Heart left ventricle (tissue), 16 donors: ENCODE measurements at regions of chr7 and their contacts with region 1.

Region 1: GRCh38 chr7:85287106-85287825 is 100.4 kb upstream of the SEMA3D start:
- DNase-seq: no peak
- ATAC-seq: no peak
- H3K4me3 ChIP-seq: no peak overlapping the region
- H3K27ac ChIP-seq: no peak overlapping the region
- H3K4me1 ChIP-seq: no peaks in the 10 kb centered on the region
- H3K27me3 ChIP-seq: no peaks in the 10 kb centered on the region
- CTCF ChIP-seq: no peak
- POLR2A ChIP-seq: no peak

Region 2: GRCh38 chr7:85074016-85074415 is 213.2 kb before region 1 on chr7:
- intact Hi-C with region 1: no loop called
- DNase-seq: no peak
- ATAC-seq: no peak
- H3K4me3 ChIP-seq: no peak overlapping the region
- H3K27ac ChIP-seq: no peak overlapping the region
- H3K4me1 ChIP-seq: peaks cover 0 to 4% (median 0%) of the 10 kb centered on the region in 12 donors
- H3K27me3 ChIP-seq: no peaks in the 10 kb centered on the region
- CTCF ChIP-seq: no peak
- POLR2A ChIP-seq: no peak

Region 3: DNA sequence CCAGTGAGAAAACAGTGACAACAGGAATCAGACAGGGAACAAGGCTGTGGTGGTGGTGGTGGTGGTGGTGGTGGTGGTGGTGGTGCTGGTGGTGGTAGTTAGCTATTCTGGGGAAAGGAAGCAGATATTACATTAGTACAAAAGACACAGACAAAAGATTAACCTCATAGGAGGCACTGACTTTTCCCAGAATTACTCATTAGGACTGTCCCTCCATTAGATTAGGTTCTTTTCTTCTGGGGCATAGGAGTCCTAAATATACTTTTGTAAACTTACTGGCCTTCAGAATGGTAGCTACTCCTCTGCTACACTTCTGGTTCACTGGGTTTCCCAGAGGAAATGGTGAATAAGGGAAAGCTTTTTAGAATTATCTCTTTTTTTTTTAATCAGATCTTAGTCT is 56.2 kb after region 1 on chr7:
- intact Hi-C with region 1: loop called in 1 of 10 experiments (anchors 10 kb)
- DNase-seq: no peak
- ATAC-seq: no peak
- H3K4me3 ChIP-seq: no peak overlapping the region
- H3K27ac ChIP-seq: no peak overlapping the region
- H3K4me1 ChIP-seq: no peaks in the 10 kb centered on the region
- H3K27me3 ChIP-seq: no peaks in the 10 kb centered on the region
- CTCF ChIP-seq: no peak
- POLR2A ChIP-seq: no peak